Dorsolateral prefrontal cortex (tissue), 120 donors: ENCODE measurements at regions of chr12 and their contacts with region 1.

Region 1: GRCh38 chr12:56127888-56128669 is at the start of gene ESYT1:
- DNase-seq: peak; percentile 81 to 99 (median 98)
- H3K4me3 ChIP-seq: peak within 1 kb of the TSS; percentile 63 to 98 (median 85)
- H3K27ac ChIP-seq: peak within 1 kb of the TSS; percentile 38 to 93 (median 84)
- H3K27me3 ChIP-seq: no peaks in the 10 kb centered on the region
- CTCF ChIP-seq: peak in 43 of 56 donors; percentile 3 to 63 (median 34)
- total RNA-seq, gene ESYT1: 32.5 to 86.2 (median 56.5) TPM

Region 2: DNA sequence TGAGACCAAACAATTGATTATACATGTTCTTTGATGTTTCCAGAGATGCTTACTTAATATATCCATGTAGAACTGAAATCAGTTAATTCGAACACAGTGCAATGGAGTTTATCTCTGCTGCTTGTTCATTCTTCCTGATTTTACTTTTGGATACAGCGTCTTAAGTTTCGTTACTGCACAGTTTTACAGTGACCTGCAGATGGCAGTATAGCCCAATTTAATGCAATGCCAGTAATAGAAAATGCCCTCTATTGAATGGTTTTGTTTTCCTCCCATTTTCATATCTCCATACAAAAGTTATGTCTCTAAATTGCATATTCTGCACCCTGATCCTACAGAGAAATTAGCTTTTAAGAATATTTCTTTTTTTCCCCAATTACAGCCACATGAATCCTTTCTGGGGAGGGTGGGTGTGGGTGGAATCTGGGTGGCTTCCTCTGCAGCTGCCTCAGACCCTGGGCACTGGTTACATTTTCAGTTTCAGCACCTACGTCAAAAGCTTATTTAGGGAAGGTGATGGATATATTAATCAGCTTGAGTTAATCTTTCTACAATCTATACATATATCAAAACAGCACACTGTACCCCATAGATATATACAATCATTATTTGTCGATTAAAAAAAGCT is 1378.8 kb before region 1 on chr12:
- intact Hi-C with region 1: no loop called
- DNase-seq: peak in 1 of 10 donors; percentile 5
- H3K4me3 ChIP-seq: no peak overlapping the region
- H3K27ac ChIP-seq: no peak overlapping the region
- H3K27me3 ChIP-seq: peaks cover 0 to 4% (median 0%) of the 10 kb centered on the region in 45 donors
- CTCF ChIP-seq: peak; percentile 70 to 92 (median 82)

Region 3: DNA sequence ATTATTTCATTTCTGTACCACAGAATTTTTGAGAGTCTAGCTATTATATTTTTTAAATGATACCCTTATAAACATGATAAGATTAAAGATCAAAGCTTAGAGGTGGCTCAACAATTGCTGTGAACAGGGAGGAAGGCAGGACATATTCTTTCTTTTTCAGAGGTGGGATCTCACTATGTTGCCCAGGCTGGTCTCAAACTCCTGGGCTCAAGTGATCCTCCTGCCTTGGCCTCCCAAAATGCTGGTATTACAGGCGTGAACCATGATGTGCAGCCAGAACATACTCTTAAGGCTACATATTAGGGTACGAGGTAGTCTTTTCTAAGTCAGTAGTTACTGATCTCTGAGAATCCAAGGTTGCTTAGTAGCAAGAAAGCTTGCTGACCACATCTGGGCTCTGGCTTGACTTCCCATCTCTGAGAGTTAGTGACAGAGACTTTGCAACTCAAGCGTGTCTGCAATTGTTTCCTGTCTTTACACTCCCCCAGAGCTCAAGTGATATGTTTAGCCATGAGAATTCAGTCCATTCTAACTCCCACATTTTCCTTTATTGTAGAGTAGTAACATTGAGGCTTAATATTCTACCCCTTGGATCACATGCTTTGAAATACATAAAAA is 145.7 kb before region 1 on chr12:
- intact Hi-C with region 1: no loop called
- DNase-seq: no peak
- H3K4me3 ChIP-seq: no peak overlapping the region
- H3K27ac ChIP-seq: no peak overlapping the region
- H3K27me3 ChIP-seq: no peaks in the 10 kb centered on the region
- CTCF ChIP-seq: no peak

Region 4: GRCh38 chr12:56152318-56153033 is 24.4 kb after region 1 on chr12 and contains the start of gene MYL6B:
- intact Hi-C with region 1: loop called in 1 of 2 experiments (anchors 2 kb)
- DNase-seq: peak; percentile 91 to 96 (median 94)
- H3K4me3 ChIP-seq: peak within 1 kb of the TSS; percentile 58 to 93 (median 81)
- H3K27ac ChIP-seq: peak within 1 kb of the TSS; percentile 73 to 98 (median 93)
- H3K27me3 ChIP-seq: no peaks in the 10 kb centered on the region
- CTCF ChIP-seq: peak in 27 of 56 donors; percentile 1 to 51 (median 30)
- total RNA-seq, gene MYL6B: 75.7 to 236 (median 160) TPM

Region 5: DNA sequence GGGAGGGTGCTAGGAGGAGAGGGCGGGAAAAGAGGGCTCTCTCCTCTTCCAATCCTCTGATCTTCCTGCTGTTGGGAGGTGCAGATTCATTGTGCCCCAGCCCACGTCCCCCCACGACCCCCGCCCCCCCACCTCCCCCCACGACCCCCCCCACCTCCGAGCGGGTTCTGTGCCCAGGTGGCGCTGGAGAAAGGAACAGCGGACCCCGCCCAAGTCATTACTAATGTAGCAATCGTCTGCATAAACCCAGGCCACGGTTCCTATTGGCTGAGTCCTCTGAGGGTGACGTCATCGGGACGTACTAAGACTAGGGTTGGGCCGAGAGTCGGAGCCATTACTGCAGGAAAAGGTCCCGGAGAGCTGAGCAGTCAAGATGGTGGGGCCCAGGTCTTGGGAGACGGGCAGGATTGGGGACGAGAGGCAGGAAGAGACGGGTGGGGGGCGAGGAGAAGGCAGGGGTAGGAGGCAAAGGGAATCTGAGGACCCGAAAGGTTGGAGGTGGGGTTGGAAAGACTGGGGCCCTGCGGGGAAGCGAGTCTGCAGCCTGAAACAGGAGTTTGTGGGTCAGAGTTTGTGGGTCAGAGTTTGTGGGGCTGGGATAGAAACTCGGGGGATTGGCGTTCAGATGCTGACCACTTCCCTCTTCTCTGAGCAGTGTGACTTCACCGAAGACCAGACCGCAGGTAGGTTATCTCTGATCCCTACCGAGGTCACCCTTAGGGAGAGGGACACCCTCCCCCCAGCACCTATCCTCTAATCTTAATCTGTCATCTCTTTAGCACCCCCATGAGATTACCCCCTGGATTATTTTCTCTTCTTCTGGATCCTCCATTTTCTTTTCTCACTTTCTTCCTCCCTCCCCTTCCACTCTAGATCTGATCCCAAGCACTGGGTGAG is 30.2 kb after region 1 on chr12 and contains the start of gene MYL6:
- intact Hi-C with region 1: loop called (anchors 2 to 5 kb)
- DNase-seq: peak; percentile 92 to 100 (median 98)
- H3K4me3 ChIP-seq: peak within 1 kb of the TSS; percentile 60 to 95 (median 85)
- H3K27ac ChIP-seq: peak within 1 kb of the TSS; percentile 67 to 97 (median 92)
- H3K27me3 ChIP-seq: no peaks in the 10 kb centered on the region
- CTCF ChIP-seq: peak in 6 of 56 donors; percentile 4 to 21 (median 7)
- total RNA-seq, gene MYL6: 295 to 716 (median 377) TPM